CD8-positive, alpha-beta T cell (primary cell): ENCODE measurements at regions of chr17 and their contacts with region 1.

Region 1: DNA sequence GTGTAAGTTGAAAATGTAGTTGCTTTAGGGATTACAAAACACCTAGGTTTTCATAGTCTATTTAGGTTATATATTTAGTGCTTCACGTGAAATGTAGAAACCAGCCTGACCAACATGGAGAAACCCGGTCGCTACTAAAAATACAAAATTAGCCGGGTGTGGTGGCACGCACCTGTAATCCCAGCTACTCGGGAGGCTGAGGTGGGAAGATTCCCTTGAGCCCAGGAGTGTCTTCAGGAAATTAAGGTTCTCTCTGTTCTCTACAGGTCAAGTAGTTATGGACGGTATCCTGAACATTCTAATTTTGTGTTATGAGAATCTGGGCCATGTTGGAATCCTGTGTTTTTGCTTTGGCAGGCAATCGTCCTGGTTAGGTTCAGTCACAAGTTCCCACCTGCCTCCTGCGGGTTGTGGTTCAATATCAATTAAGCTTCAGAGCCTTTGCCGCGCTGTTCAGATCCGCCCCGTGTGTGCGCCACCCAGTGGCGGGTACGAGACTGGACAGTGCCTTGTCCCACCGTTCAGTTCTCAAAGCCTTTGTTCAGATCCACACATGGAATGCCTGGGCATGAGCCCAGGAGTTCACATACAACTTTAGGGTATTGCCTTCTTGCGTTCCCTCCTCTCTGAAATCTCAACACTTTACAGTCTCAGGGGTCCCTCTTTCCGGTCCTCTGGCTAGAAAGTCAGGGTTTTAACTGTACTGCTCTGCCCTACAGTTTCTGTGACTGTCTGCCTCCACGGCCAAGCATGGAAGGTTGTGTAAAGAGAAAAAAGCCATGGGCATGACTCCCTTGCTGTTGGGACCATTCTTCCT is 41.7 kb downstream of the HEATR6 start:
- DNase-seq: peak; percentile 29 to 83 (median 69)
- ATAC-seq: peak; percentile 98
- H3K4me3 ChIP-seq: no peak overlapping the region
- H3K4me3 Mint-ChIP-seq: no peak overlapping the region
- H3K27ac ChIP-seq: no peak overlapping the region
- H3K27ac Mint-ChIP-seq: no peak overlapping the region
- H3K4me1 ChIP-seq: peaks cover 3% of the 10 kb centered on the region
- H3K4me1 Mint-ChIP-seq: peaks cover 4% of the 10 kb centered on the region
- H3K27me3 ChIP-seq: peaks cover 0 to 3% of the 10 kb centered on the region in 2 experiments
- H3K27me3 Mint-ChIP-seq: peaks cover 6% of the 10 kb centered on the region
- CTCF ChIP-seq: peak; percentile 76

Region 2: GRCh38 chr17:59914274-59914854 is 122.6 kb before region 1 on chr17:
- CTCF ChIA-PET with region 1: interaction called, 10 read pairs
- POLR2A ChIA-PET with region 1: no interaction called
- intact Hi-C with region 1: loop called (anchors 5 to 10 kb)
- DNase-seq: peak in 2 of 9 experiments; percentile 57 to 68
- ATAC-seq: peak; percentile 70
- H3K4me3 ChIP-seq: no peak overlapping the region
- H3K4me3 Mint-ChIP-seq: no peak overlapping the region
- H3K27ac ChIP-seq: no peak overlapping the region
- H3K27ac Mint-ChIP-seq: no peak overlapping the region
- H3K4me1 ChIP-seq: no peaks in the 10 kb centered on the region
- H3K4me1 Mint-ChIP-seq: peaks cover 11% of the 10 kb centered on the region
- H3K27me3 ChIP-seq: no peaks in the 10 kb centered on the region
- H3K27me3 Mint-ChIP-seq: no peaks in the 10 kb centered on the region
- CTCF ChIP-seq: peak; percentile 62

Region 3: GRCh38 chr17:60047046-60047445 is 10.0 kb after region 1 on chr17:
- CTCF ChIA-PET with region 1: interaction called, 15 read pairs
- POLR2A ChIA-PET with region 1: no interaction called
- intact Hi-C with region 1: no loop called
- DNase-seq: no peak
- ATAC-seq: no peak
- H3K4me3 ChIP-seq: no peak overlapping the region
- H3K4me3 Mint-ChIP-seq: no peak overlapping the region
- H3K27ac ChIP-seq: no peak overlapping the region
- H3K27ac Mint-ChIP-seq: no peak overlapping the region
- H3K4me1 ChIP-seq: no peaks in the 10 kb centered on the region
- H3K4me1 Mint-ChIP-seq: no peaks in the 10 kb centered on the region
- H3K27me3 ChIP-seq: no peaks in the 10 kb centered on the region
- H3K27me3 Mint-ChIP-seq: no peaks in the 10 kb centered on the region
- CTCF ChIP-seq: no peak

Region 4: GRCh38 chr17:60065136-60065535 is 28.1 kb after region 1 on chr17:
- CTCF ChIA-PET with region 1: no interaction called
- POLR2A ChIA-PET with region 1: no interaction called
- intact Hi-C with region 1: no loop called
- DNase-seq: no peak
- ATAC-seq: no peak
- H3K4me3 ChIP-seq: no peak overlapping the region
- H3K4me3 Mint-ChIP-seq: no peak overlapping the region
- H3K27ac ChIP-seq: no peak overlapping the region
- H3K27ac Mint-ChIP-seq: no peak overlapping the region
- H3K4me1 ChIP-seq: no peaks in the 10 kb centered on the region
- H3K4me1 Mint-ChIP-seq: no peaks in the 10 kb centered on the region
- H3K27me3 ChIP-seq: no peaks in the 10 kb centered on the region
- H3K27me3 Mint-ChIP-seq: no peaks in the 10 kb centered on the region
- CTCF ChIP-seq: no peak

Region 5: DNA sequence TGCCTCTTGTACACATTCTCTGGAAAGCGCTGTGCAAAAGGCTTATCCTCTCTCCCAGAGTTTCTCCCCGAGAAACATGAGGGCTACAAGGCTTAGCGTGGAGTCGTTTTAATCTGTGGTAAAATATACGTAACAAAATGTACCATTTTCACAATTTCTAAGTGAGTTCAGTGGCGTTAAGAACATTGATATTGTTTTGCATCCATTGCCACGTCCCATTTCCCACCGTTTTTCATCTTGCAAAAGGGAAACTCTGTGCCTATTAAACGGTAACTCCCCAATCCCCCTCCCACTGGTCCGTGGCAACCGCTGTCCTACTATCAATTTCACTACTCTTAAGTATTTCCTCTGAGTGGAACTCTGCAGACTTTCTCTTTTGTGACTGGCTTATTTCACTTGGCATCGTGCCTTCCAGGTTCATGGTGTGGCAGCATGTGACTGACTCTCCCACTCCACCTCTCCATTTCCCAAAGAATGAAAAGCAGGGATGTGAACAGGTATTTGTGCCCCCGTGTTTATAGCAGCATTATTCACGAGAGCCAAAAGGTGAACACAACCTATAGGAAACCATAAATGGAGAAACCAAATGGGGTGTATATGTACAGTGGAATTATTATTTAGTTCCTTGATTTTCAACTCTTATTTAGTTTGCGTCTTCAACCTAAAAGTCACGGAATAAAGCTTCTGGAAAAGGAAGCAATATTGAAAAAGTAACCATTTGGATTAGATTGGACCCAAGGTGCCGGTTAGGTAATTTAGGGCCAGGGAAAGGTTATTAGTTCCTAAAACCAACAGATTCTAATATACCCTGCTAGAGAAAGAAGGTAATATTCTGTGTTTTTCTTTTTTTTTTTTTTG is 356.1 kb after region 1 on chr17:
- CTCF ChIA-PET with region 1: no interaction called
- POLR2A ChIA-PET with region 1: no interaction called
- intact Hi-C with region 1: no loop called
- DNase-seq: peak in 5 of 9 experiments; percentile 1 to 56 (median 32)
- ATAC-seq: no peak
- H3K4me3 ChIP-seq: peak overlapping the region; percentile 86 to 93
- H3K4me3 Mint-ChIP-seq: peak overlapping the region; percentile 95
- H3K27ac ChIP-seq: peak overlapping the region; percentile 89 to 90
- H3K27ac Mint-ChIP-seq: peak overlapping the region; percentile 93
- H3K4me1 ChIP-seq: peaks cover 24% of the 10 kb centered on the region
- H3K4me1 Mint-ChIP-seq: peaks cover 40% of the 10 kb centered on the region
- H3K27me3 ChIP-seq: no peaks in the 10 kb centered on the region
- H3K27me3 Mint-ChIP-seq: no peaks in the 10 kb centered on the region
- CTCF ChIP-seq: no peak